ENCODE measurements at regions of chr12 and their contacts with region 1.

Region 1: GRCh38 chr12:121060149-121061001 is 21.3 kb upstream of the OASL start:
- DNase-seq: peak; percentile 79
- H3K4me3 Mint-ChIP-seq: peak overlapping the region; percentile 80
- H3K27ac Mint-ChIP-seq: peak overlapping the region; percentile 98
- H3K4me1 Mint-ChIP-seq: peaks cover 37% of the 10 kb centered on the region
- H3K27me3 Mint-ChIP-seq: no peaks in the 10 kb centered on the region

Region 2: DNA sequence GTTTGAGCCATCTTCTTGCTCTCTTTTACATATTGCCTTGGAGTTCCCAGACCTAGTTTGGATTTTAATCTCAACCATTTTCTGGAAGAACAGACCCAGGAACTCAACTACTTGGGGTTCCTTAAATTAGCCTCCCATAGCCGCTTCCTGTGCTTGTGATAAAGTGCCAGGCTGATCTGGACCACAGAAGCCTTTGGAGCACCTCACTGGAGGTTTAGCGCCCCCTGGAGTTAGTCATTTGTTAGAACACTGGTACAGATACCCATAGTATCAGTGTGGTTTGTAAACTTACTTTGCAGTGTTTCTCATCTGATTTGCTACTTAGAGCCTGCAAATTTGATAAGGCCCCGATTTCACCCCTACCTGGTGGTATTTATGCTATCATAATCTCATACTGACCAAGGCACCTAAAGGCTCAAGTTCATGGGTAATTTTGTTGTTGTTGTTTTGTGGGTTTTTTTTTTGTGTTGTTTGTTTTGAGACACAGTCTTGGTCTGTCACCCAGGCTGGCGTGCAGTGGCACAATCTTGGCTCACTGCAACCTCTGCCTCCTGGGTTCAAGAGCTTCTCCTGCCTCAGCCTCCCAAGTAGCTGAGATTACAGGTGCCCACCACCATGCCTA is 346.4 kb before region 1 on chr12:
- CTCF ChIA-PET with region 1: no interaction called
- POLR2A ChIA-PET with region 1: no interaction called
- DNase-seq: peak; percentile 74
- H3K4me3 Mint-ChIP-seq: no peak overlapping the region
- H3K27ac Mint-ChIP-seq: no peak overlapping the region
- H3K4me1 Mint-ChIP-seq: peaks cover 43% of the 10 kb centered on the region
- H3K27me3 Mint-ChIP-seq: no peaks in the 10 kb centered on the region

Region 3: GRCh38 chr12:121015825-121016766 is 44.3 kb before region 1 on chr12 and contains the start of gene C12orf43:
- CTCF ChIA-PET with region 1: interaction called, 9 read pairs
- POLR2A ChIA-PET with region 1: interaction called, 11 read pairs
- DNase-seq: peak; percentile 94
- H3K4me3 Mint-ChIP-seq: peak within 1 kb of the TSS; percentile 90
- H3K27ac Mint-ChIP-seq: peak within 1 kb of the TSS; percentile 71
- H3K4me1 Mint-ChIP-seq: peaks cover 23% of the 10 kb centered on the region
- H3K27me3 Mint-ChIP-seq: no peaks in the 10 kb centered on the region
- total RNA-seq, gene C12orf43: 11.5 to 12.3 TPM

Region 4: GRCh38 chr12:121038861-121039666 is 21.3 kb before region 1 on chr12 and contains the start of gene OASL:
- CTCF ChIA-PET with region 1: interaction called, 42 read pairs
- POLR2A ChIA-PET with region 1: interaction called, 32 read pairs
- DNase-seq: peak; percentile 79
- H3K4me3 Mint-ChIP-seq: peak within 1 kb of the TSS; percentile 99
- H3K27ac Mint-ChIP-seq: peak within 1 kb of the TSS; percentile 98
- H3K4me1 Mint-ChIP-seq: peaks cover 42% of the 10 kb centered on the region
- H3K27me3 Mint-ChIP-seq: peaks cover 22% of the 10 kb centered on the region
- total RNA-seq, gene OASL: 104 to 107 TPM

Region 5: GRCh38 chr12:121110211-121110940 is 50.0 kb after region 1 on chr12:
- CTCF ChIA-PET with region 1: interaction called, 26 read pairs
- POLR2A ChIA-PET with region 1: interaction called, 7 read pairs
- DNase-seq: peak; percentile 73
- H3K4me3 Mint-ChIP-seq: no peak overlapping the region
- H3K27ac Mint-ChIP-seq: no peak overlapping the region
- H3K4me1 Mint-ChIP-seq: peaks cover 8% of the 10 kb centered on the region
- H3K27me3 Mint-ChIP-seq: no peaks in the 10 kb centered on the region

Measured in activated CD4-positive, alpha-beta memory T cell treated with anti-CD3 and anti-CD28 coated beads, Interleukin-2, amount 10 ng/mL, durations not matched to agents 7 days and 5 days (primary cell).